CD4-positive, alpha-beta memory T cell (primary cell): ENCODE measurements at regions of chr3 and their contacts with region 1.

Region 1: GRCh38 chr3:129576514-129577352 is 29.7 kb downstream of the PLXND1 start:
- DNase-seq: peak; percentile 84 to 90 (median 89)
- H3K4me3 ChIP-seq: peak overlapping the region in 1 of 2 donors; percentile 12
- H3K4me3 Mint-ChIP-seq: peak overlapping the region in 7 of 8 donors; percentile 53 to 79 (median 71)
- H3K27ac ChIP-seq: peak overlapping the region; percentile 67
- H3K27ac Mint-ChIP-seq: peak overlapping the region; percentile 90 to 98 (median 98)
- H3K4me1 ChIP-seq: peaks cover 54% of the 10 kb centered on the region
- H3K4me1 Mint-ChIP-seq: peaks cover 17 to 58% (median 39%) of the 10 kb centered on the region in 4 donors
- H3K27me3 ChIP-seq: no peaks in the 10 kb centered on the region
- H3K27me3 Mint-ChIP-seq: no peaks in the 10 kb centered on the region

Region 2: GRCh38 chr3:129503471-129504291 is 73.1 kb before region 1 on chr3:
- CTCF ChIA-PET with region 1: no interaction called
- POLR2A ChIA-PET with region 1: no interaction called
- intact Hi-C with region 1: no loop called
- DNase-seq: no peak
- H3K4me3 ChIP-seq: no peak overlapping the region
- H3K4me3 Mint-ChIP-seq: no peak overlapping the region
- H3K27ac ChIP-seq: no peak overlapping the region
- H3K27ac Mint-ChIP-seq: peak overlapping the region in 1 of 7 donors; percentile 50
- H3K4me1 ChIP-seq: no peaks in the 10 kb centered on the region
- H3K4me1 Mint-ChIP-seq: no peaks in the 10 kb centered on the region
- H3K27me3 ChIP-seq: no peaks in the 10 kb centered on the region
- H3K27me3 Mint-ChIP-seq: no peaks in the 10 kb centered on the region

Region 3: DNA sequence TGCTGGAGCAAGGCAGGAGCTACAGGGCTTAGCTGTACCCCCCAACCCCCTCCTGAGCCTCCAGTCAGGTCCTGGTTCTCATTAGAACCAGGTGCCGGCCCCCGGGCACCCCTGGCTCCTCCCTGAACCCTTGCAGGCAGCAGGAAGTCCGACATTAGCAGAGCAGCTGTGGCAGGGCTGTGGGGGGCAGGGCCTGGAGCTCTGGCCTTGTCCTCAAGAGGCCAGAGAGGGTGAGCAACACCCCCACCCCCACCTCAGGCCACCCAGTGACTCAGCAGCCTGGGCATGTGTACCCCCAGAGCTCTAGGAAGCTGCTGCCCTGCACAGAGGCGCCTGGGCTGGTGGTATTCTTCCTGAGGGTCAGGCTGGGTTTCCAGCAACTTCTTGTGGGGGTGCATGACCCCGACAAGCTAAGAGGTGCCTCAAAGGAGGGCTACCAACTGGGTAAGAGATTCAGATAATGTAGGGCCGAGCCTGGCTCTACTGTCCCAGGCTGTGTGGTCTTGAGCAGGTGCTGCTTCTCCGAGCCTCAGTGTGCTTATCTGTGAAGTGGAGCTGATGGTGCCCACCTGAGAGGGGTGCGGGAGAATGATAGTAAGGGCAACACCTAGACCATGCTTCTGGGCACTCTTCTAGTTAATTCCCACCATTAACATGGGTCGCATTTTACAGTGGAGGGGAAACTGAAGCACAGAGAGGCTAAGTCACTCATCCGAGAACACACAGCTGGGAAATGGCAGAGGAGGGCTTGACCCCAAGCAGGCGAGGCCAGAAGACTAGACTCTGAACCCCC is 17.8 kb before region 1 on chr3:
- CTCF ChIA-PET with region 1: interaction called, 3 read pairs
- POLR2A ChIA-PET with region 1: interaction called, 16 read pairs
- intact Hi-C with region 1: no loop called
- DNase-seq: no peak
- H3K4me3 ChIP-seq: no peak overlapping the region
- H3K4me3 Mint-ChIP-seq: no peak overlapping the region
- H3K27ac ChIP-seq: no peak overlapping the region
- H3K27ac Mint-ChIP-seq: peak overlapping the region in 3 of 7 donors; percentile 29 to 85 (median 50)
- H3K4me1 ChIP-seq: peaks cover 7% of the 10 kb centered on the region
- H3K4me1 Mint-ChIP-seq: peaks cover 5 to 24% (median 12%) of the 10 kb centered on the region in 4 donors
- H3K27me3 ChIP-seq: no peaks in the 10 kb centered on the region
- H3K27me3 Mint-ChIP-seq: peaks cover 0 to 1% of the 10 kb centered on the region in 2 donors

Region 4: DNA sequence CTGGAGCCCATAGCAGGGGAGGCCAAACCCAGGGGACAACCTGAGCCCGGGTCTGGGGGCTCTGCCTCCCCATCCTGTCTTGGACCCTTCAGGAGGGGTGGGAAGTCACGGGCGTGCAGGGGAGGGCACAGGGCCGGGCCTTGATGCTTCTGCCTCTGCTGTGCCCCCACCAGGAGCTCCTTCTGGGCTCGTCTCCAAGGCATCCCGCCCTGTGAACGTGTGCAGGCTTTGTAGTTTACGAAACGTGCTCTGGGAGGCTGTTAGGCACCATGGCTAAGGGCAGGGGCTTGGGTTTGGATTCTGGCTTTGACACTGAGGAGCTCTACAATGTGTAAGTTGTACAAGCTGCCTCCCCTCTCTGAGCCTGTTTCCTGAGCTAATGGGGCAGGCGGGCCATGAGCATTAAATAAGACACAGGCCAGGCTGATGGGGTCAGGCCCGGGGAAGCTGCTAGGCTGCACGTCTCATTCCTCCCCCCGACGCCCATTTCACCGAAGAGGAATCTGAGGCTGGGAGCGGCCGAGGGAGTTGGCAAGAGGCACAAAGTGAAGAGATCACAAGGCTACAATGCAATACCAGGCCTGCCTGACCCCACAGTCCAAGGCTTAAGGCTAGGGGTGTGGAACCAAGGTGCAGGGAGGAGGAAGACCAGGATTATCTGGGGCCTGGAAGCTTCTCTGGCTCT is 10.2 kb after region 1 on chr3:
- CTCF ChIA-PET with region 1: interaction called, 3 read pairs
- POLR2A ChIA-PET with region 1: interaction called, 128 read pairs
- intact Hi-C with region 1: no loop called
- DNase-seq: no peak
- H3K4me3 ChIP-seq: no peak overlapping the region
- H3K4me3 Mint-ChIP-seq: no peak overlapping the region
- H3K27ac ChIP-seq: no peak overlapping the region
- H3K27ac Mint-ChIP-seq: peak overlapping the region in 3 of 7 donors; percentile 2 to 13 (median 5)
- H3K4me1 ChIP-seq: no peaks in the 10 kb centered on the region
- H3K4me1 Mint-ChIP-seq: peaks cover under 1 to 9% (median 4%) of the 10 kb centered on the region in 4 donors
- H3K27me3 ChIP-seq: no peaks in the 10 kb centered on the region
- H3K27me3 Mint-ChIP-seq: no peaks in the 10 kb centered on the region

Region 5: DNA sequence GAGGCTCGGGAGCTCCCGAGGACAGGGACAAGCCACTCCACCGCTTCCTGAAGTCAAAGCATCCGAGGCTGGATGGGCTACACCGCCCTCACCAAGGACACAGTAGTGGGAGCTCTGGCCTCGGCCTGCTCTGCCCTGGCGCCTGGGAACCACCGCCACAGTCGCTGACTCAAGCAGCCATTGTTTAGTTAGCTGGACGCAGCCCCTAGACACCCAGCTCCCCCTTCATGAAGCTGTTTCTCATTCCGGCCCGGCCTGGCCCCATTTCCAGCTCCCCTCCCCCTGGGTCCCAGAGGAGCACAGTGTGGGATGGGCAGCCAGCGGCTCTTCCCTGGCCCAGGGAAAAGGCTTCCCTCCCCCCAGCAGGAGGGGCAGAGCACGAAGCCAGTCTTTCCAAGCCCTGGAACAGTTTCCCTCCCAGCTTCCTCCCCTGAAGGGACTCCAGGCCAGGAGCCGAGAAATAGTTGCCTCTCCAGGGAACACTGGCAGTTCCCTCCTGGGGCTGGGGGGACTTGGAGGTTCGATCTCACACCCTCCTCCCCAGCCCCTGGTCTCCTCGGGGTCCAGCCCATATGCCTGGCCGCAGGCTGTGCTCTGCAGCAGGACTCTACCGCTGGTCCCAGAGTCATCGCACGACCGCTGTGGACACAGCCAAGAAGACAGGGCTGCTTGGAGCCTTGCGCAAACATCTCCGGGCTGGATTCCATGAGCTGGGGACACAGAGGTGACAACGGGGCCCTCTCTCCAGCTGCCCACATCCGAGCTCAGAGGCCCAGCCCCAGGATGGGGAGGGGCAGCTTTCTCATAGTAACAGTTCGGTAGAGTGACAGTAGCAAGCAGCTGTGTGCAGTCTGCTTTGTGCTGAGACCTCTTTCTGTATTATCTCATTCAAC is 19.7 kb after region 1 on chr3:
- CTCF ChIA-PET with region 1: interaction called, 10 read pairs
- POLR2A ChIA-PET with region 1: interaction called, 128 read pairs
- intact Hi-C with region 1: no loop called
- DNase-seq: no peak
- H3K4me3 ChIP-seq: no peak overlapping the region
- H3K4me3 Mint-ChIP-seq: peak overlapping the region in 1 of 8 donors; percentile 26
- H3K27ac ChIP-seq: no peak overlapping the region
- H3K27ac Mint-ChIP-seq: peak overlapping the region in 1 of 7 donors; percentile 29
- H3K4me1 ChIP-seq: peaks cover 27% of the 10 kb centered on the region
- H3K4me1 Mint-ChIP-seq: peaks cover 19 to 60% (median 41%) of the 10 kb centered on the region in 4 donors
- H3K27me3 ChIP-seq: no peaks in the 10 kb centered on the region
- H3K27me3 Mint-ChIP-seq: no peaks in the 10 kb centered on the region